Activated B cell treated with CpG ODN at 0.5 μM for 24 hours (primary cell): ENCODE measurements at regions of chr1 and their contacts with region 1.

Region 1: DNA sequence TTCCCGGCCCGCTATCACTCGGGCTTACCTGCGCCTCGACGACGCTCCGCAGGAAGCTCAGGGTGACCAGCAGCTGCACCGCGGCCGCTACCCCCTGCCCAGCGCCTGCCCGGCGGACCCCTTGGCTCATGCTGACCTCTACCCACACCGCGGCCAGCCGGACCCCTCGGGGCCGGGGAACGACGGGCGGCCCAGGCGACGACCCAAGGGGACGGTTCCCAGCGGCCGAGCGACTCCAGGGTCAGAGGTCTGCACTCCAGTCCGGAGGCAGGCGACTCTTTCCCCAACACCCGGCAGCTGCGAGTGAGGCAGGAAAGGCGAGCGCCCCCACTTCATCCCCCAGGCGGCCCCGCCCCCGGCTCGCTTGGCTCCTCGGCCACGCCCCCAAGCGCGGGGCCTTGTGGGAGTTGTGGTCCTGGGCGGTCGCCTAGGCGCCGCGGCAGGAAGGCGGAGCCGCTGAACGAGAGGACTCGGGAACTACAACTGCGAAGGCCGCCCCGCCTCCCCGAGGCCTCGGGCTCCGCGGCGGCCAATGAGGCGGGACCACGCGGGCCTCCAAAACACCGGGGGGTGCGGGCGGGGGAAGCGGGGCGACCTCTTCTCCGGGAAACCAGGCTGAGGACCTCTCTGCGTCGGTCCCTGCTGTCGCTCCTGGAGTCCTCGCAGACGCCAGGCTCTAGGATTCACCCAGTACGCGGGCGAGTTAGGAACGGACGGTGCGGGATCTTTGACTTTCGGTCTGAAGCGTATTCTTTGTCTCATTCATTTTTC is at the start of gene ERO1B:
- DNase-seq: peak; percentile 100
- ATAC-seq: peak; percentile 91
- H3K4me3 Mint-ChIP-seq: peak within 1 kb of the TSS; percentile 97
- H3K27ac Mint-ChIP-seq: peak within 1 kb of the TSS; percentile 89
- H3K4me1 Mint-ChIP-seq: peaks cover 40% of the 10 kb centered on the region
- H3K27me3 Mint-ChIP-seq: no peaks in the 10 kb centered on the region
- CTCF ChIP-seq: no peak
- total RNA-seq, gene ERO1B: 13.2 and 17.5 TPM in 2 replicates

Region 2: DNA sequence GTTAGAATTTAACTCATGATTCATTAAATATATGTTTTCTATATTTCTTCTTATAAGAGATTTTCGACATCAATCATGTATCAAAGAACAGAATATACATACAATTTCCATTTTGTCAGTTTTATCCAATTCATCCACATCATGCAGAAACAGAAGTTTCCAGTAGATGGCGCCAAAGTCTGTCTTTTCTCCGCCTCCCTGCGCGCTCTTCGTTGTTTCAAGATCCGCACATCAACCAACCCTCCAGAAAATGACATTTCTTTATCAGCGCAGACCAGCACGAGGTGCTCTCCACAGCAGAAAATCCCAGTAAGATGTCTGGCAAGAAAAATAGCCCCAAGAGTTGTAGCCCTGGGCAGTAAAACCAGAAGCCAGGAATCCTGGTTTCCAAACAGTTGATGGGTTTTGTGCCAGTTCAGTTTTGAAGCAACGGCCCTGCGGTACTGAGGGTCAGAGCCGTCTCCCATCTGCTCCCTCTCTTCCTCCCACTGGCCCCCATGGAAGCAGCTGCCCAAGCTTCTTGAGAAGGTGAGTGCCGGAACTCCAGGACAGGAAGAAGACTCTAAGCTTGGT is 178.1 kb before region 1 on chr1:
- CTCF ChIA-PET with region 1: interaction called, 4 read pairs
- POLR2A ChIA-PET with region 1: no interaction called
- intact Hi-C with region 1: loop called (anchors 2 kb)
- DNase-seq: no peak
- ATAC-seq: peak; percentile 67
- H3K4me3 Mint-ChIP-seq: no peak overlapping the region
- H3K27ac Mint-ChIP-seq: no peak overlapping the region
- H3K4me1 Mint-ChIP-seq: peaks cover 2% of the 10 kb centered on the region
- H3K27me3 Mint-ChIP-seq: peaks cover 4% of the 10 kb centered on the region
- CTCF ChIP-seq: peak; percentile 52

Region 3: DNA sequence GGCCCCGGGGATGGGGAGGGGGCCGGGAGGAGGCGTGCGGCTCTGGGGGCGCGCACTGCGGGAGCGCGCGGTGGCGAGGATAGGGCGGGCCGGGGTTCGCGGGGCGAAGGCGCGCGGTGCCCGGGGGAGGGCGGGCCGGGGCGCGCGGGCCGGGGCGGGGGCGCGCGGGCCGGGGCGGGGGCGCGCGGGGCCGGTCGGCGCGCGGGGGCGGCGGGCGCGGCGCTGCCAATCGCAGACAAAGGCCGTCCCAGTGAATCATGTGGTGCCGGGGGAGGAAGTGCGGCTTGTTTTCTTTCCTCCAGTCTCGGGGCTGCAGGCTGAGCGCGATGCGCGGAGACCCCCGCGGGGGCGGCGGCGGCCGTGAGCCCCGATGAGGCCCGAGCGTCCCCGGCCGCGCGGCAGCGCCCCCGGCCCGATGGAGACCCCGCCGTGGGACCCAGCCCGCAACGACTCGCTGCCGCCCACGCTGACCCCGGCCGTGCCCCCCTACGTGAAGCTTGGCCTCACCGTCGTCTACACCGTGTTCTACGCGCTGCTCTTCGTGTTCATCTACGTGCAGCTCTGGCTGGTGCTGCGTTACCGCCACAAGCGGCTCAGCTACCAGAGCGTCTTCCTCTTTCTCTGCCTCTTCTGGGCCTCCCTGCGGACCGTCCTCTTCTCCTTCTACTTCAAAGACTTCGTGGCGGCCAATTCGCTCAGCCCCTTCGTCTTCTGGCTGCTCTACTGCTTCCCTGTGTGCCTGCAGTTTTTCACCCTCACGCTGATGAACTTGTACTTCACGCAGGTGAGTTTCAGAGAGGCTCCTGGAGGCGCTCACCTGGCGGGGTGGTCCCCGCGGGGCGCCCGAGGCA is 139.4 kb before region 1 on chr1 and contains the start of gene GPR137B:
- CTCF ChIA-PET with region 1: interaction called, 4 read pairs
- POLR2A ChIA-PET with region 1: interaction called, 9 read pairs
- intact Hi-C with region 1: loop called (anchors 1 kb)
- DNase-seq: peak; percentile 50
- ATAC-seq: peak; percentile 75
- H3K4me3 Mint-ChIP-seq: peak within 1 kb of the TSS; percentile 96
- H3K27ac Mint-ChIP-seq: peak within 1 kb of the TSS; percentile 89
- H3K4me1 Mint-ChIP-seq: peaks cover 29% of the 10 kb centered on the region
- H3K27me3 Mint-ChIP-seq: peaks cover 33% of the 10 kb centered on the region
- CTCF ChIP-seq: no peak
- total RNA-seq, gene GPR137B: 10.6 and 11.8 TPM in 2 replicates

Region 4: DNA sequence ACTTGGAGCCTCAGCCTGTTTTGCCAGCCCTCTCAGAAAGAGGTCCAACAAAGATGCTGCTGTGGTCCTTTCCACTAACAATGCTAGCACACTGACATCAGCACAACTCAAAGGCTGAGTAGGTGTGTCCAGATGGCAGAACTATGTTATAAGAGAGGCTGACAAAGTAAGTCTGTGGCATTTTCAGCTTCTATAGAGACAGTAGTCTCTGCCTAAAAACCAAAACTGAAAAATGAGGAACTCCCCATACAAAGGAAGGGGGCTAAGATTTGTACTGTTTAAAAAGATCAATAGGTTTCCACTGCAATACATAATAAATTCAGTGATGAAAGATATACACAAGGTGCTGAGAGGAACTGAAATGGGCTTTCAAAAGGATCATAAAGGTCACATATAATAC is 12.4 kb before region 1 on chr1:
- CTCF ChIA-PET with region 1: no interaction called
- POLR2A ChIA-PET with region 1: interaction called, 12 read pairs
- intact Hi-C with region 1: loop called (anchors 1 kb)
- DNase-seq: no peak
- ATAC-seq: no peak
- H3K4me3 Mint-ChIP-seq: no peak overlapping the region
- H3K27ac Mint-ChIP-seq: no peak overlapping the region
- H3K4me1 Mint-ChIP-seq: peaks cover 15% of the 10 kb centered on the region
- H3K27me3 Mint-ChIP-seq: no peaks in the 10 kb centered on the region
- CTCF ChIP-seq: no peak

Region 5: DNA sequence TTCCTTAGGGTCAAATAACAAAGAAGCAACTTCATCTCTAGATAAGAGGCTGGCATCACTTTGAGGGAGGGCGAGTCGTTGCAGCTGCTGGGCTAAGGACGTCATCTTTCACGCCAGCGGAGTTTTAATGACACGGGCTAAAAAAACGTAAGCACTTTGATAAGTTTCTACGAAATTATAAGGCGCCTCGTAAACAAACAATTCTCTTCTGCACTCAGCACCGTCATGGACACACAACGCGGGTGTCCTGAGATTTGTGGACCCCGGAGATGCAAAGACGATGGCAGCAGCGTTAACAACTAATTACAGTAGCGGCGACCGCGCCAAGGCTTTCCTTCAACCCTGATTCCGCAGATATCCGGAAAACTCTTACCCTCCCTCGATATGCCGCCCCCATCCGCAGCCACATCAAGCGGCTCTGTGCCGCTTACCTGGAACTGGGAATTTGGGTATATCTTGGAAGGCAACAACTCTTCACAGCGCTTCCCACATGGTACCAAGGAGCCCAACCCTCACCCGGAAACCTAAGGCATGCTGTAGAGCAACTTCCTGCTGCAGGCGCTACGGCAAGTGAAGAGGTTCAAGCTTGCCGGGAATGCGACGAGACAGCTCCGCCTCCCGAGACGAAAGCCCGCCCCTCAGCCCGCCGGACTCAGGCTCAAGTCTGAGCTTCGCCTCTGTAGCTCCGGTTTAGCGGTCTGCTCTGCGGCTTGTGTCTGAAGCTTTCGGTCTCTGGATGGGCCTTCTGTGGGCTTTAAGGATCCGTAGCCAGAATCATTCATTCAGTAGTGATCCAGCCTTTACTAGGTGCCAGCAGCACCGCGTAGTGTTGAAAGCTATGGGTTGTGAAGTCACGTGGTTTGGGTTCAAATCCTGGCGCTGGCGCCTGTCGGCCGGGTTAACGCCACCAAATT is 322.4 kb after region 1 on chr1 and contains the start of gene HEATR1:
- CTCF ChIA-PET with region 1: no interaction called
- POLR2A ChIA-PET with region 1: no interaction called
- intact Hi-C with region 1: loop called (anchors 2 kb)
- DNase-seq: peak; percentile 85
- ATAC-seq: peak; percentile 95
- H3K4me3 Mint-ChIP-seq: peak within 1 kb of the TSS; percentile 98
- H3K27ac Mint-ChIP-seq: peak within 1 kb of the TSS; percentile 89
- H3K4me1 Mint-ChIP-seq: peaks cover 26% of the 10 kb centered on the region
- H3K27me3 Mint-ChIP-seq: peaks cover 7% of the 10 kb centered on the region
- CTCF ChIP-seq: no peak
- total RNA-seq, gene HEATR1: 69.3 and 78.5 TPM in 2 replicates